Dorsolateral prefrontal cortex (tissue), 120 donors: ENCODE measurements at regions of chr20 and their contacts with region 1.

Region 1: GRCh38 chr20:41347523-41348429 is 7.2 kb downstream of the LPIN3 start:
- DNase-seq: peak in 2 of 10 donors; percentile 52 to 58
- H3K4me3 ChIP-seq: no peak overlapping the region
- H3K27ac ChIP-seq: peak overlapping the region in 1 of 59 donors; percentile 11
- H3K27me3 ChIP-seq: no peaks in the 10 kb centered on the region
- CTCF ChIP-seq: no peak

Region 2: DNA sequence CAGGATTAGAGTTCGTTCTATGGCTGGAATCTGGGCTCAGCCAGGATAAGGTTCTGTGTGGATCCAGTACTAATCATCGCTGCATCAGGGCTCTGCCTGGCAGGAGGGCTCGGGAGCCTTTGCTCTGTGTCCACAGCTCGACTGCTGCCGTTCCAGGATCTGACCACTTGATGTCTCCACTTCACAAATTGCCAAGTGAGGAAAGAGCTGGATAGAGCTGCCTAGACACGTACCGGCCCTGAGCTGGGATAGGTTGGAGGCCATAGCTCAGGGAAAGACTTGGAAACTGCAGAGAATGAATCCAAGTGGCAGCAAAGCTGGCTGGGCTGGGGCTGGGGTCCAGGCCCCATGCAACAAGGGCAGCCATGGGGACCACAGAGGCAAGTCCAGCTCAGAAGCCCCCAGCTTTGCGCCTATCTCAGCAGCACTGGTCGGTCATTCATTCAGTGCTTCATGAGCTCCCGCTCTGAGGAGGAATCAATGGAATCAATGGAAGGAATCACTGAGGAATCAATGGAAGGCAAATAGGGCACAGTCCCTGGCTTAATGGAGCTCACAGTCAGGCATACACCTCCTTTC is 357.1 kb before region 1 on chr20:
- intact Hi-C with region 1: loop called in 1 of 2 experiments (anchors 5 kb)
- DNase-seq: peak; percentile 50 to 82 (median 74)
- H3K4me3 ChIP-seq: no peak overlapping the region
- H3K27ac ChIP-seq: peak overlapping the region in 4 of 59 donors; percentile 3 to 49 (median 42)
- H3K27me3 ChIP-seq: no peaks in the 10 kb centered on the region
- CTCF ChIP-seq: peak; percentile 8 to 89 (median 75)

Region 3: DNA sequence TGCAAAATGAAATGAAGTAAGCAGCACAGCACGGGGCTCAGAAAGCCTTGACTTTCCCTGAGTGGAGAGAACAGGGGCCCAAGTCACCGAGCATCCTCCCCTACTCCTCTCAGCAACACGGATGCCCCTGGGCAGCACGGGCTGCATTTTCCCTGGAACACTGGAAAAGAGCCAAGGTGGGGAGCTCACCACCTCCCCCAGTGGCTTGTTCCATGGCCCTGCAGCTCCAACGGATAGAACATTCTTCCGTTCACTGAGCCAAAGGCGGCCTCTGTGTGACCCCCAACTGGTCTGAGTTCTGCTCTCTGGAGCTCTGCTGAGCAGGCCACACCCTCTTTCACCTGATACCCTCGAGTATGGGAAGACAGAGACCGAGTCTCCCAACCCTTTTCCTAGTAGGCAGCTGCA is 39.7 kb after region 1 on chr20:
- intact Hi-C with region 1: no loop called
- DNase-seq: no peak
- H3K4me3 ChIP-seq: no peak overlapping the region
- H3K27ac ChIP-seq: no peak overlapping the region
- H3K27me3 ChIP-seq: no peaks in the 10 kb centered on the region
- CTCF ChIP-seq: no peak

Region 4: DNA sequence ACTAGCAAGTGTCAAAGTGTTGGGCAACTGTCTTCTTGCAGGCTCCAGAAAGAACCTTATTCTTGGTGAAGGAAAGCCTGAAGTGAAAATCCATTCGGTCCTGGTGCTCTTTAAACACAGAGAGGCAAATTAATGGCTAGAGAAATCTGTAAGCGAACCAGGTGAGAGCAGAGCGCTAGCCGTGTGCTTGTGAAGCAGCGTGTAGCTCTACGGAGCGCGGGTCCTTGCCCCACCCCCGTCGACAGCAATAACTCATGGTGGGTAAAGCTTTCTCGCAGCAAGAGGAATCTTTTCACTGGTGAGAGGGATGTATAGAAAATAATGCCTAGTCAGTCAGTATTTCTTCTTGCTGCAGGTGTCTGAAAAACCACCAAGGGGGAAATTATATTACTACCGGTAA is 55.8 kb after region 1 on chr20:
- intact Hi-C with region 1: loop called in 1 of 2 experiments (anchors 5 kb)
- DNase-seq: no peak
- H3K4me3 ChIP-seq: no peak overlapping the region
- H3K27ac ChIP-seq: no peak overlapping the region
- H3K27me3 ChIP-seq: no peaks in the 10 kb centered on the region
- CTCF ChIP-seq: no peak

Region 5: DNA sequence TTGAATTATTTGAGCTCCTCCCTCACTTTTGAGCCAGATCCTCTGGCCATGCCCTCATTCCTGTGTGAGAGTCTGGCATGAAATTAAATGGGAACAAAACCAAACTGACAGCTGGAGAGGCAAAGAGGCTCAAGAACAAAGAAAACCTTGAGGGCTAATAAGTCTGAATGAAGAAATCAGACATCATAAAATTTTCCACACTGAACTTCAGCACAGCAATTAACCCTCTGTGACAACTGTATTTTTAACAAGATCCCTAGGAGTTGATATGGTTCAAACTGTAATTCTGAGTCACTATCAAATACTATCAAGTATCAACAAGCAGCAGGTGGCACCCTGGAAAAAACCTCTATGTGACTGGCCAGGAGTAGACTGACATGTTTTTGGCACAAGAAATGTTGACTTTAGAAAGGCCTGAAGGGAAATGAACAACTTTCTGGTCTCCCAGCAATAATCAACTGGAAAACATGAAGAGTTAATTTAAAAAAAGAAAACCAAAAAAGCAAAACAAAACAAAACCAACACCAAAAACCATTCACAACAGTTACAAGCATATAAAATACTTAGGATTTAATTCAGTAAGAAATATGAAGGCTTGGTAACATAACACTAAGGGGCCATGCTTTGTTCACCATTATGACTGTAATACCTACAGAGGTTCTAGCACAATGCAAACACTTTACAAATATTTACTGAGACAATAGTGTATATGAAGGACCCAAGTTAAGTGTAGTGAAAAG is 128.4 kb after region 1 on chr20:
- intact Hi-C with region 1: no loop called
- DNase-seq: peak in 1 of 10 donors; percentile 14
- H3K4me3 ChIP-seq: no peak overlapping the region
- H3K27ac ChIP-seq: peak overlapping the region in 1 of 59 donors; percentile 38
- H3K27me3 ChIP-seq: no peaks in the 10 kb centered on the region
- CTCF ChIP-seq: no peak